HEK293 (cell line): ENCODE measurements at regions of chr17 and their contacts with region 1.

Region 1: DNA sequence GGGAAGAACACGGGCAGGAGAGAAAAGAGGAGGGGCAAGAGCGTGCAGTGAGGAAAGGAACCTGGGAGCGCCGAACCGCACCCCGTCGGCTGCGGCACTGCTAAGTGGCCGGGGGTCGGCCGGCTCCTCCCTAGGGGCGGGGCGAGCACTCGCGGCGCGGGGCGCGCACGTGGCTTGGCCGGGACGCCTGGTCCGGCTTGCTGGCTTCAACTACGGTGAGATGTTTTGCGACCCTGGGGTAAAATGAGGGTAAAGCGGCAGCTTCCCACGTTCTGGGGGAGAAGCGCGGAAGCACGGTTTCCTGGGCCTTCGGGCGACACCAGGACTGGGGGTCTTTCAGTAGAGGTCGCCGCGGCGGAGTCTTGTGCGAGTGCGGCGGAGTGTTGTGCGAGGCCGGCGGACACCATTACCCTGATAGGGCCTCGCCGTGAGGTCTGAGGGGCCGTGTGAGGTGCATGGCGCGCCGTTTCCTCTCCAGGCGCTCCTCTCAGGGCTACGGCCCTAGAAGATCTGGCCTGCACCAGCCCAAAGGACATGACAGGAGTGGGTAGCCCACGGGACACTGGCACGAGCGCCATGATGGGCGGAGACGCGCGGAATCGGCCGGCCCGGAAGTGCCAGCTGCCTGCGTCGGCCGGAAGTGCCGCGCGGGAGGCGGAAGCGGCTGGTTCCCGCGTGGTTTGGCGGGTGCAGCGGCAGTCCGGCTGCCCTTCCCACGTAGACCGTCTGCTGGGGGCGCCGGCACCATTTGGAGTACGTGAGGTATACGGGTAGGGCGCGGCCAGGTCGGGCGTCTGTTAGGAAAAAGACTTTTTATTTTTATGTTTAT is at the starts of genes MYO19 and PIGW:
- H3K4me3 ChIP-seq: peak within 1 kb of the TSS; percentile 91
- H3K27ac ChIP-seq: peak within 1 kb of the TSS; percentile 94
- H3K4me1 ChIP-seq: 0 out of 2 replicates have a peak, but pooled peaks cover 3% of the 10 kb centered on the region
- CTCF ChIP-seq: peak; percentile 62

Region 2: DNA sequence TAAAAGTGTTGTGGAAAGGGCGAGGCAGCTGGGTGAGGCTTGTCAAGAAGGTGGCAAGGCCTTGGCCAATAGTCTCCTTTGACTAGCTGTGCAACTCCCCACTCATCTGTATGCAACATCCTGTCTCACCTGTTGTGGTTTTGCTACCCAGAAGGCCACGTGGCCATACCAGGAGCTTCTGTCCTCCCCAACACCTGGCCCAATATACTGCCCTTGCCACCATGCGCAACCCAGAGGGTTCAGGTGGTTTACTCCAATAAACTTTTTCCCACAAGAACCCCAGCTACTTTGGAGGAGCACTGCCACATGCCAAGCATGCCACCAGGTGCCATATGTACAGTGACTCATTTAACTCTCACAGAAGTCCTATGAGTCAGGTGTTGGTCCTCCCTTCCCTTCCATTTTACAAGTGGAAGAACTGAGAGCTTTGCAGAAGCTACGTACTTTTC is 10.6 kb before region 1 on chr17:
- CTCF ChIA-PET with region 1: interaction called, 13 read pairs
- POLR2A ChIA-PET with region 1: interaction called, 5 read pairs
- H3K4me3 ChIP-seq: no peak overlapping the region
- H3K27ac ChIP-seq: no peak overlapping the region
- H3K4me1 ChIP-seq: no peaks in the 10 kb centered on the region
- CTCF ChIP-seq: no peak

Region 3: DNA sequence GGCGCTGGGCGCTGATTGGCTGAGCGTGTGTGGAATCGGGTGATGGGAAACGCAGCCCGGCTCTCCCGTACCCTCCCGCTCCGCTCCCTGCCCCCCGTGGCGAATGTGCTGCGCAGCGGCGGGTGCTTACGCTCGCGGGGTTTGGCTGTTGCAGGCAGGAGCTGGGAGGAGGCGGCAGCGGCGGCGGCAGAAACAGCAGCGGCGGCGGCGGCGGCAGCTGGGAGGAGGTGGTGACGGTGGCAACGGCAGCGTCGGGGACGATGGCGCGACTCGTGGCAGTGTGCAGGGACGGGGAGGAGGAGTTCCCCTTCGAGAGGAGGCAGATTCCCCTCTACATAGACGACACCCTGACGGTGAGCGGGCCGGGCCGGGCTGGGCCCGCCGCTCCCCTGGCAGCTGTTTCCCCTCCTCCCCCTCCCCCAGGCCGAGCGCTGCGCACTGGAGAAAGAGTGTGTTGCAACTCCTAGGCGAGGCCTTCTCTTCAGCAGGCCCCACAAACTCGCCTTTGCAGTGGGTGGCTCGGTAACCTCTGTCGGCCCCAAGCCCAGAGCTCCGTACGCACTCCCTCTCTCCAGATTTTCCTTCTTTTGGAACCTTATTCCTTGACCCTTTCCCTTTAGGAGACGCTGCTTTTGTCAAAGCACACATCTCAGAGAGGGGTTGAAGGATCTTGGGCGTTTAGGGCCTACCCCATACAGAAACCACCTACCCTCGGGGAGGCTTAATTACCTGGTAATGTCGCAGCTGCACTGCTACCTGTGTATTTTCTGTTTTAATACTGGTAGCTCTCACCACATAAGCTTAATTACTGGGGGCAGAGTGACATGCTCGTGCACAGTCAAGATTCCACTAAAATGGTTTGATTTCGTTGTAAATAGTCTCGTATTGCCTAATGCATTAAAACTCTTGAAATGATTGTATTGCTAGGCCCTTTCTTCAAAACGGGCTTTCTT is 10.7 kb after region 1 on chr17:
- CTCF ChIA-PET with region 1: interaction called, 15 read pairs
- POLR2A ChIA-PET with region 1: interaction called, 81 read pairs
- H3K4me3 ChIP-seq: peak overlapping the region; percentile 99
- H3K27ac ChIP-seq: peak overlapping the region; percentile 96
- H3K4me1 ChIP-seq: peaks cover 11% of the 10 kb centered on the region
- CTCF ChIP-seq: peak; percentile 70

Region 4: GRCh38 chr17:36728030-36728991 is 193.3 kb after region 1 on chr17:
- CTCF ChIA-PET with region 1: no interaction called
- POLR2A ChIA-PET with region 1: no interaction called
- H3K4me3 ChIP-seq: no peak overlapping the region
- H3K27ac ChIP-seq: no peak overlapping the region
- H3K4me1 ChIP-seq: peaks cover 9% of the 10 kb centered on the region; the same call in 1 of the 2 replicates
- CTCF ChIP-seq: no peak